HepG2 (cell line): ENCODE measurements at regions of chr14 and their contacts with region 1.

Region 1: GRCh38 chr14:106831322-106831720 is 1304.9 kb downstream of the TMEM121 start:
- DNase-seq: peak; percentile 20
- ATAC-seq: peak; percentile 53
- H3K4me3 ChIP-seq: no peak overlapping the region
- H3K27ac ChIP-seq: no peak overlapping the region
- H3K4me1 ChIP-seq: no peaks in the 10 kb centered on the region
- H3K27me3 ChIP-seq: no peaks in the 10 kb centered on the region; a peak in 1 of 5 replicates
- CTCF ChIP-seq: peak; percentile 73
- EP300 ChIP-seq: no peak
- POLR2A ChIP-seq: no peak
- RAD21 ChIP-seq: no peak

Region 2: DNA sequence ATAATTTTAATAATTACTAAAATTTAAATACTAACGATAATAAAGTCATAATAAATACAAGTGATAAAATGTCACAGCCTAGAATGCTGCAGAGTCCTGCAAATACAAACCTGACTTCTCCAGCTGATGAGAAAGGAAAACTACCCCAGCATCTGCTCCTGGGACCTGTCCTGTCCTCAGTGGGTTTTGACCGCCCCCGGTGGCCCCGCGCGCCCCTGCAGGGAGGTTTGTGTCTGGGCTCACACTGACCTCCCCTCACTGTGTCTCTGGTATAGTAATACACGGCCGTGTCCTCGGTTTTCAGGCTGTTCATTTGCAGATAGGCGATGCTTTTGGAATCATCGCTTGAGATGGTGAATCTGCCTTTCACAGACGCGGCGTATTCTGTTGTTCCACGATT is 165.5 kb before region 1 on chr14:
- CTCF ChIA-PET with region 1: interaction called, 70 read pairs
- POLR2A ChIA-PET with region 1: no interaction called
- in situ Hi-C with region 1: no loop called
- intact Hi-C with region 1: loop called (anchors 5 kb)
- DNase-seq: no peak
- ATAC-seq: no peak
- H3K4me3 ChIP-seq: no peak overlapping the region
- H3K27ac ChIP-seq: no peak overlapping the region
- H3K4me1 ChIP-seq: no peaks in the 10 kb centered on the region
- H3K27me3 ChIP-seq: no peaks in the 10 kb centered on the region
- CTCF ChIP-seq: no peak
- EP300 ChIP-seq: no peak
- POLR2A ChIP-seq: no peak
- RAD21 ChIP-seq: no peak

Region 3: GRCh38 chr14:106776395-106776983 is 54.8 kb before region 1 on chr14:
- CTCF ChIA-PET with region 1: no interaction called
- POLR2A ChIA-PET with region 1: no interaction called
- in situ Hi-C with region 1: no loop called
- intact Hi-C with region 1: no loop called
- DNase-seq: no peak
- ATAC-seq: no peak
- H3K4me3 ChIP-seq: no peak overlapping the region
- H3K27ac ChIP-seq: no peak overlapping the region
- H3K4me1 ChIP-seq: no peaks in the 10 kb centered on the region
- H3K27me3 ChIP-seq: no peaks in the 10 kb centered on the region
- CTCF ChIP-seq: no peak
- EP300 ChIP-seq: no peak
- POLR2A ChIP-seq: no peak
- RAD21 ChIP-seq: no peak

Region 4: GRCh38 chr14:106802423-106803364 is 28.6 kb before region 1 on chr14:
- CTCF ChIA-PET with region 1: interaction called, 20 read pairs
- POLR2A ChIA-PET with region 1: no interaction called
- in situ Hi-C with region 1: no loop called
- intact Hi-C with region 1: no loop called
- DNase-seq: peak; percentile 40
- ATAC-seq: peak; percentile 98
- H3K4me3 ChIP-seq: peak overlapping the region; percentile 45 to 66 (median 50)
- H3K27ac ChIP-seq: no peak overlapping the region
- H3K4me1 ChIP-seq: peaks cover 8% of the 10 kb centered on the region
- H3K27me3 ChIP-seq: peaks cover 0 to 12% of the 10 kb centered on the region in 2 experiments; a peak in 1 of 5 replicates
- CTCF ChIP-seq: peak; percentile 77
- EP300 ChIP-seq: no peak
- POLR2A ChIP-seq: no peak
- RAD21 ChIP-seq: no peak

Region 5: GRCh38 chr14:106821119-106821518 is 10.2 kb before region 1 on chr14:
- CTCF ChIA-PET with region 1: no interaction called
- POLR2A ChIA-PET with region 1: no interaction called
- in situ Hi-C with region 1: no loop called
- intact Hi-C with region 1: no loop called
- DNase-seq: no peak
- ATAC-seq: no peak
- H3K4me3 ChIP-seq: no peak overlapping the region
- H3K27ac ChIP-seq: no peak overlapping the region
- H3K4me1 ChIP-seq: no peaks in the 10 kb centered on the region
- H3K27me3 ChIP-seq: peaks cover 0 to 6% of the 10 kb centered on the region in 2 experiments; a peak in 1 of 5 replicates
- CTCF ChIP-seq: no peak
- EP300 ChIP-seq: no peak
- POLR2A ChIP-seq: no peak
- RAD21 ChIP-seq: no peak

Region 6: DNA sequence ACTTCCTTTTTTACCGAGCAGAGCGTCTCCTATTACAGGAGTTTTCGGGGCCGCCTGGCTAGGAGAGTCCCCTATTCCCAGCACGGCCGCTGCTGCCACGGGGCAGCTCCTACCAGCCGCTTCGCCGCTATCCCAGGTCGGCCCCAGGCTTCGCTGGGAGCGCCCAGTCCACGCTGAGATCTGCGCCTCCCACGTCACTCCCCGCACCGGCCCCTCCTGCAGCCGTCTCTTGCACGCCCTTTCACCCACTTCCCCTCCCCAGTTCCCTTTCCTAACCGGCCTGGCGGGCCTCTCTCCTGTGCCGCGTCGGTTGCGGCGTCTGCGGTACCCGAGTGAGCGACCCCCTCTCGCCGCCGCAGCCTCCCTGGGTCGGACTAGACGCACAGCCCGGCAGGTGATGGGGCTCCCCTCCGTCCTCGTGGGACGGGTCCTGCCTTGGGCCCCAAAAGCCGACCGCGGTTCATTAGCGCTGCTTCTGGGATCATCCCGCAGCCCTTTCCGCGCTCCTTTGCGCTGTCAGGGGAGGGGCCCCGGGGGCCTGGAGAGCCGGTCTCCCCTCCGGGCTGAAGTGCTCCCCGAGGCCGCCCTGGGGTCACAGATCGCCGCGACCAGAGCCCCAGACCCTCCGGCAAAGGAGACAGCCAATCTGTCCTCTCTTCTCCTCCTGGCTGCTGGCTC is 13.4 kb after region 1 on chr14:
- CTCF ChIA-PET with region 1: interaction called, 54 read pairs
- POLR2A ChIA-PET with region 1: interaction called, 10 read pairs
- in situ Hi-C with region 1: no loop called
- intact Hi-C with region 1: no loop called
- DNase-seq: peak; percentile 44
- ATAC-seq: peak; percentile 68
- H3K4me3 ChIP-seq: peak overlapping the region; percentile 76 to 88 (median 80)
- H3K27ac ChIP-seq: peak overlapping the region; percentile 95
- H3K4me1 ChIP-seq: peaks cover 59% of the 10 kb centered on the region
- H3K27me3 ChIP-seq: no peaks in the 10 kb centered on the region
- CTCF ChIP-seq: no peak
- EP300 ChIP-seq: no peak
- POLR2A ChIP-seq: peak; percentile 54 to 79; a peak in 3 of 4 replicates
- RAD21 ChIP-seq: no peak

Region 7: GRCh38 chr14:106872611-106873446 is 41.5 kb after region 1 on chr14:
- CTCF ChIA-PET with region 1: interaction called, 44 read pairs
- POLR2A ChIA-PET with region 1: no interaction called
- in situ Hi-C with region 1: no loop called
- intact Hi-C with region 1: no loop called
- DNase-seq: peak; percentile 84
- ATAC-seq: peak; percentile 98
- H3K4me3 ChIP-seq: no peak overlapping the region
- H3K27ac ChIP-seq: no peak overlapping the region
- H3K4me1 ChIP-seq: peaks cover 20% of the 10 kb centered on the region
- H3K27me3 ChIP-seq: no peaks in the 10 kb centered on the region
- CTCF ChIP-seq: peak; percentile 78
- EP300 ChIP-seq: no peak
- POLR2A ChIP-seq: no peak
- RAD21 ChIP-seq: peak; percentile 69

Region 8: DNA sequence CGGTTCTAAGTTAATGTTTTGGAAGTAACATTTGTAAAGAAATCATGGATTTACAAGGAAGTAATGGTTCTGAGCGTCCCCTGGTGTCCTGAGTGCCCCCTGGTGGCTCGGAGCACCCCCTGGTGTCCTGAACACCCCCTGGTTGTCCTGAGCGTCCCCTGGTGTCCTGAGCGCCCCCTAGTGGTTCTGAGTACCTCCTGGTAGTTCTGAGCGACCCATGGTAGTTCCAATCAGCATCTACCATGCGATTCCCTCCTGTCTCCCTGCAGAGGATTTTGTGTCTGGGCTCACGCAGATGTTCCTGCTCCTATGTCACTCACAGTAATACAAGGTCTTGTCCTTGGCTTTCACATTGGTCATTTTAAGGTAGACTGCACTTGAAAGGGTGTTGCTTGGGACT is 47.9 kb after region 1 on chr14:
- CTCF ChIA-PET with region 1: interaction called, 39 read pairs
- POLR2A ChIA-PET with region 1: no interaction called
- in situ Hi-C with region 1: no loop called
- intact Hi-C with region 1: no loop called
- DNase-seq: peak; percentile 65
- ATAC-seq: peak; percentile 92
- H3K4me3 ChIP-seq: no peak overlapping the region
- H3K27ac ChIP-seq: no peak overlapping the region
- H3K4me1 ChIP-seq: no peaks in the 10 kb centered on the region
- H3K27me3 ChIP-seq: no peaks in the 10 kb centered on the region
- CTCF ChIP-seq: peak; percentile 79
- EP300 ChIP-seq: no peak
- POLR2A ChIP-seq: no peak
- RAD21 ChIP-seq: no peak